ENCODE measurements at regions of chr21 and their contacts with region 1.

Region 1: DNA sequence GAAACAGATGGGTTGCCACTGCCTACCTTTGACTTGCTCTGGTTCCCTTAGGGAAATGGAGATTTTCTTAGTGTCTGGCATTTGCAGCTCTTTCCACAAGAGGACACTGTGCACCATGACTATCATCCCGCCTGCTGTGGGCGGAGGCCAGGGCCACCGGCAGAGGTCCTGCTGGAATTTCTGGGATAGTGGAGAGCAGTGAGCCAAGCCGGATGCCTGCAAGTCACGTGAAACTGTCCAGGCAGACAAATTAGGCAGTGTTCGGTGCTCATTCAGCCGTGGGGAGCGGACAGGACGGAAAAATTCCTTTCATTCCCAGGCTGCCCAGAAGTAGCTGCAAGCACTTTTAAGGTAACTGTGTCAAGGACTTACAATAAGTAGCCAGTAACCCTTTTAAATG is 43.4 kb downstream of the IGSF5 start:
- DNase-seq: peak in 1 of 2 donors; percentile 71
- H3K4me3 ChIP-seq: no peak overlapping the region
- H3K27ac ChIP-seq: no peak overlapping the region
- H3K4me1 ChIP-seq: no peaks in the 10 kb centered on the region
- H3K27me3 ChIP-seq: no peaks in the 10 kb centered on the region
- CTCF ChIP-seq: peak; percentile 36 to 59 (median 54)

Region 2: GRCh38 chr21:39961251-39961650 is 172.9 kb after region 1 on chr21:
- intact Hi-C with region 1: no loop called
- DNase-seq: no peak
- H3K4me3 ChIP-seq: no peak overlapping the region
- H3K27ac ChIP-seq: no peak overlapping the region
- H3K4me1 ChIP-seq: no peaks in the 10 kb centered on the region
- H3K27me3 ChIP-seq: no peaks in the 10 kb centered on the region
- CTCF ChIP-seq: no peak

Region 3: GRCh38 chr21:40120940-40121575 is 332.7 kb after region 1 on chr21:
- intact Hi-C with region 1: loop called (anchors 2 kb)
- DNase-seq: no peak
- H3K4me3 ChIP-seq: no peak overlapping the region
- H3K27ac ChIP-seq: no peak overlapping the region
- H3K4me1 ChIP-seq: no peaks in the 10 kb centered on the region
- H3K27me3 ChIP-seq: no peaks in the 10 kb centered on the region
- CTCF ChIP-seq: peak; percentile 82 to 92 (median 90)

Measured in ascending aorta (tissue), 2 donors.